WTC11 (cell line): ENCODE measurements at regions of chr10 and their contacts with region 1.

Region 1: DNA sequence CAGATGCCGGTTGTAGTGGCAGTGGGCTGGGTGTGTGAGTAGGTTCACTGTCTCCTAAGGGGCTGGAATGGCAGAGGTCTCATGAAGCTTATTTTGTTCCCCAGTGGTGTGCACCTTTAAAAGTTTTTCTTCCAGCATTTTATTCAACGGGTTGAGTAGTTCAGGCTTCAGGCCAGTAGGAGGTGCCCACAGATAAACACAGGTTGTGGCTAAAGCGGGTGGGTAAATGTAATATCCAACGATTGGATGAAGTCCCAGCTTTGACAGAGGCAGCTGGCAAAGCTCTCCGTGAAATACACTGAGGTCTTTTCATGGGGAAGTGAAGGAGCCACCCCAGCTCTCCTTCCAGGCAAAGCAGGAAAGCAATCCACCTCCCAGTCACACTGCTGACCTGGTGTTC is 339.8 kb upstream of the LRRTM3 start:
- DNase-seq: peak; percentile 46
- ATAC-seq: peak; percentile 98
- H3K4me3 Mint-ChIP-seq: no peak overlapping the region
- H3K27ac Mint-ChIP-seq: no peak overlapping the region
- H3K4me1 Mint-ChIP-seq: 0 out of 2 replicates have a peak, but pooled peaks cover 2% of the 10 kb centered on the region
- H3K27me3 Mint-ChIP-seq: no peaks in the 10 kb centered on the region
- CTCF ChIP-seq: peak; percentile 28; the same call in 1 of the 2 replicates

Region 2: DNA sequence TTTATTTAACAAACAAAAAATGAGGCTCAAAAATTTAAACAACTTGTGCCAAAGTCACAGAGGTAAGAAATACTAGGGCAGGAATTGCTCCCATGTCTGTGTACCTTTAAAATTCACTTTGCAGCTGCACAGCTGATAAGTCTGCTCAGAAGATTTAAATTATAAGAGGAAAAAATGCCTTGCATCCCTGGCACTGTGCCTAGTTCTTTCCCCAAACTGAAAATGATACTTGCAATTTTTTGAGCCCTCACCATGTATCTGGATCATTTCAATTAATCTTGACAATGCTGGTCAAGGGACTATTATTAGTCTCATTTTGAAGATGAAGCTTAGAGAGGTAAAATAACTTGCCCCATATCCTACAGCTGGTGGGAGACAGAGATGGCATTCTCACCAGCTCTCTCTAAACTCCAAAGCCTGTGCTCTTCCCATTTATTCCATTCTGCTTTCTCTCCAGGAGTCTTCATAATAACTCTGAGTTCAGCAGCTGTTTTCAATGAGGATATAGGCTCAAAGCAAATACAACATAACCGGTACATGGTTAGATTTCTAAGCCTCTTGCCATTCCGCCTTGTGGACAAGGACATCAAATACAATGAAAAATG is 10.7 kb before region 1 on chr10:
- CTCF ChIA-PET with region 1: interaction called, 14 read pairs
- POLR2A ChIA-PET with region 1: no interaction called
- DNase-seq: no peak
- ATAC-seq: no peak
- H3K4me3 Mint-ChIP-seq: no peak overlapping the region
- H3K27ac Mint-ChIP-seq: no peak overlapping the region
- H3K4me1 Mint-ChIP-seq: peaks cover 13% of the 10 kb centered on the region
- H3K27me3 Mint-ChIP-seq: no peaks in the 10 kb centered on the region
- CTCF ChIP-seq: no peak

Region 3: GRCh38 chr10:66925896-66926715 is 340.0 kb after region 1 on chr10 and contains the start of gene LRRTM3:
- CTCF ChIA-PET with region 1: interaction called, 36 read pairs
- POLR2A ChIA-PET with region 1: no interaction called
- DNase-seq: peak; percentile 61
- ATAC-seq: peak; percentile 95
- H3K4me3 Mint-ChIP-seq: peak within 1 kb of the TSS; percentile 82
- H3K27ac Mint-ChIP-seq: peak within 1 kb of the TSS; percentile 67; the same call in 1 of the 2 replicates
- H3K4me1 Mint-ChIP-seq: peaks cover 68% of the 10 kb centered on the region
- H3K27me3 Mint-ChIP-seq: peaks cover 30% of the 10 kb centered on the region
- CTCF ChIP-seq: peak; percentile 46; the same call in 1 of the 2 replicates
- total RNA-seq, gene LRRTM3: 0.32 to 0.52 TPM (median 0.48 TPM) in 3 replicates

Region 4: DNA sequence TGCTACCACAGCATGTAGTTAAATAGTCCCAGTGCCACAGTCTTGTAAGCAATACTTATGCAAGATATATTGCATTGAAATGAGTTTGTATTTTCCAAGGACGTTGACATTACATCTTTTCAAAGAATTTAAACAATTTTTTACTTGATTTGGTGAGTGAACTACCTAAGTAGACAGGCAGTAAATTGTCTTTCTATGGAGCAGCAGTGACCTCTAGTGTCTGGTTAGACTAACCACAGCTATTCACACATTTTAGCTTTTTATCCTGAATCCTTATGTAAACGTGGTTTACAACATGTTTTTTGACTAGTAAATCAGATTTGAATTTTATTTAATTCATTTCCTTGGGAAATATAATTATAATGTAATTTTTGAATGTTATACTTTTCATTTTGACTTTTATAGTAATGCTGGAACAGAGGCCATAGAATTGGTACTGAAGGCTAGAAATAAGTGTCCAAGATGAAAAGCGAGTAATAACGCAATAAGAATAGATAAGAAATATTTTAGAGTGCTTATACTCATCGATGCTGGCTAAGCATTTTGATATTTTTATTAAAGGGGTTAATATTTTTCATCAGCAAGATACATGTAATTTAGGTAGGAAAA is 345.4 kb after region 1 on chr10:
- CTCF ChIA-PET with region 1: interaction called, 36 read pairs
- POLR2A ChIA-PET with region 1: no interaction called
- DNase-seq: no peak
- ATAC-seq: peak; percentile 50
- H3K4me3 Mint-ChIP-seq: no peak overlapping the region
- H3K27ac Mint-ChIP-seq: no peak overlapping the region
- H3K4me1 Mint-ChIP-seq: peaks cover 44% of the 10 kb centered on the region
- H3K27me3 Mint-ChIP-seq: peaks cover 30% of the 10 kb centered on the region
- CTCF ChIP-seq: peak; percentile 62